MCF 10A (cell line): ENCODE measurements at regions of chr6 and their contacts with region 1.

Region 1: DNA sequence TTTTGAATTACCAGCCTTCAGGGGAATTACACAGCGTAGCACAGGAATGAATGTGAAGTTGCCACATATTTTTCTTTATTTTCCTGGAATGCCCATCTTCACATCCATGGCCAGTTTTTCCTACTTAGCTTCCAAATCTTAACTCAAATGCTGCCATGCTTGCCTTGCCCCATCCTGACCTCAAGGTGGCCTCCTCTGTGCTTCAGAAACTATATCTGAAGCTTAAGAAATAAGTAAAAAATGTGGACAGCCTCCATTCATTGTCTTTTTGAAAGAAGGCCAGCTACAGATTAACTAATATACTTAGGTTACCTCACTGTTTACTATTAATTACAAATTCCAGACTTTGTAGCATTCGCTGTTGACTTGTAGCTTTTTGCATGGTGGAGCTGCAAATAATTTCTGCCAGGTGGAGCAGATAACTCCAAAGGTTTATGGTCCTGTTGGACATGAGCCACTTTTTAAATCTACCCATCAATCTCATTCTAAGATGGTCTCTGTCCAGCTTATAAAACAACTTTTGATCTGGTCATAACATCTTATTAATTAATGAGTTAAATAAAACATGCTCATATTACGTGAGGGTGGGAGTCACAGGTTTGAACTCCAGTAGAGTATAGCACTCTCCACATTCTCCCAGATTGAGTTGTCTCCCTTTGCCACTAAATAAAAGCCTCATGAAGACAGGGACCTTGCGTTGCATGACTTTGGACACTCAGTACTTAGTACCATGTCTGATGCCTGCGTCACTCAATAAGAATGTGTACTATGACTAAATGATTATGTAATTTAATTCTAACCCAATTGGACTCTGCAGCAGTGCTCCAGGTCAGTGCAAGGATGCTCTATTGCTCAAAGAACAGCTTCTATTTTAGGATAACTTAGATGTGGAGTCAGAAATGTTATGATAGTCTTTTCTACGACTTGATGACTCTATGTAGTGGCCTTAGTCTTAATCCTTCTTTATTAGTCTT is 678.6 kb upstream of the CITED2 start:
- DNase-seq: no peak
- H3K4me3 Mint-ChIP-seq: no peak overlapping the region
- H3K27ac Mint-ChIP-seq: peak overlapping the region; percentile 74
- H3K4me1 Mint-ChIP-seq: peaks cover 22% of the 10 kb centered on the region
- H3K27me3 Mint-ChIP-seq: no peaks in the 10 kb centered on the region
- CTCF ChIP-seq: peak; percentile 10

Region 2: GRCh38 chr6:139981768-139982181 is 71.3 kb before region 1 on chr6:
- CTCF ChIA-PET with region 1: no interaction called
- POLR2A ChIA-PET with region 1: interaction called, 6 read pairs
- intact Hi-C with region 1: loop called (anchors 5 kb)
- DNase-seq: peak; percentile 57
- H3K4me3 Mint-ChIP-seq: peak overlapping the region; percentile 3
- H3K27ac Mint-ChIP-seq: peak overlapping the region; percentile 98
- H3K4me1 Mint-ChIP-seq: peaks cover 65% of the 10 kb centered on the region
- H3K27me3 Mint-ChIP-seq: no peaks in the 10 kb centered on the region
- CTCF ChIP-seq: no peak